Spleen (tissue), 13 donors: ENCODE measurements at regions of chr1 and their contacts with region 1.

Region 1: GRCh38 chr1:89632657-89633247 is at the start of gene LRRC8C:
- DNase-seq: peak; percentile 99
- H3K4me3 ChIP-seq: peak within 1 kb of the TSS; percentile 63 to 91 (median 86)
- H3K27ac ChIP-seq: peak within 1 kb of the TSS; percentile 77 to 97 (median 95)
- H3K4me1 ChIP-seq: peaks cover 5 to 82% (median 52%) of the 10 kb centered on the region in 6 donors
- H3K27me3 ChIP-seq: no peaks in the 10 kb centered on the region
- CTCF ChIP-seq: peak in 10 of 11 experiments; percentile 27 to 79 (median 63)
- POLR2A ChIP-seq: no peak
- total RNA-seq, gene LRRC8C: 16.0 to 33.0 (median 27.8) TPM

Region 2: GRCh38 chr1:89762779-89763648 is 130.3 kb after region 1 on chr1:
- intact Hi-C with region 1: loop called (anchors 2 kb)
- DNase-seq: peak; percentile 98
- H3K4me3 ChIP-seq: peak overlapping the region; percentile 24 to 69 (median 43)
- H3K27ac ChIP-seq: peak overlapping the region; percentile 10 to 77 (median 52)
- H3K4me1 ChIP-seq: peaks cover 14 to 60% (median 35%) of the 10 kb centered on the region in 6 donors
- H3K27me3 ChIP-seq: no peaks in the 10 kb centered on the region
- CTCF ChIP-seq: peak; percentile 97 to 100 (median 99)
- POLR2A ChIP-seq: no peak